Ascending aorta (tissue), 2 donors: ENCODE measurements at regions of chr15 and their contacts with region 1.

Region 1: DNA sequence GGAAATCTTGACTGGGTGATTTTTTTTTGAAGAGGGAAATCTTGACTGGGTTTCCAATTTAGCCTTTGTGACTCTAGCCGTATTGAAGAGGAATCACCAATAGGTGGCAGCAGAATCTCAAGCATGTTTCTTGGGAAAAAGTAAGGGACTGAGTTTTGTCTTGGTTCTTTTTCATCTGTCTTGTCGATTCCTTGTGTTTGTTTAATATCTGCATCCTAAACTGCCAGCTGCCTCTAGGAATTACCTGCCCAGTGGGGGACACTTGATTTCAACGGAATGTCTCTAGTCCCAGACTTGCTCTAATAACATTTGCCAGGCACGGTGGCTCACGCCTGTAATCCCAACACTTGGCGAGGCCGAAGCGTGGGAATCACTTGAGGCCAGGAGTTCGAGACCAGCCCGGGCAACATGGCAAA is 89.2 kb downstream of the RBPMS2 start:
- DNase-seq: no peak
- H3K4me3 ChIP-seq: no peak overlapping the region
- H3K27ac ChIP-seq: no peak overlapping the region
- H3K4me1 ChIP-seq: peaks cover 0 to 5% of the 10 kb centered on the region in 2 donors
- H3K27me3 ChIP-seq: no peaks in the 10 kb centered on the region
- CTCF ChIP-seq: peak; percentile 68 to 80 (median 71)

Region 2: GRCh38 chr15:64634576-64635498 is 51.4 kb before region 1 on chr15:
- intact Hi-C with region 1: no loop called
- DNase-seq: no peak
- H3K4me3 ChIP-seq: no peak overlapping the region
- H3K27ac ChIP-seq: no peak overlapping the region
- H3K4me1 ChIP-seq: peaks cover 4 to 12% of the 10 kb centered on the region in 2 donors
- H3K27me3 ChIP-seq: no peaks in the 10 kb centered on the region
- CTCF ChIP-seq: no peak

Region 3: GRCh38 chr15:64809649-64810496 is 123.6 kb after region 1 on chr15:
- intact Hi-C with region 1: loop called (anchors 2 kb)
- DNase-seq: peak in 1 of 2 donors; percentile 85
- H3K4me3 ChIP-seq: no peak overlapping the region
- H3K27ac ChIP-seq: no peak overlapping the region
- H3K4me1 ChIP-seq: peaks cover 0 to 3% of the 10 kb centered on the region in 2 donors
- H3K27me3 ChIP-seq: no peaks in the 10 kb centered on the region
- CTCF ChIP-seq: peak; percentile 76 to 94 (median 92)

Region 4: GRCh38 chr15:65110676-65111292 is 424.6 kb after region 1 on chr15:
- intact Hi-C with region 1: no loop called
- DNase-seq: no peak
- H3K4me3 ChIP-seq: no peak overlapping the region
- H3K27ac ChIP-seq: peak overlapping the region in 1 of 2 donors; percentile 42
- H3K4me1 ChIP-seq: no peaks in the 10 kb centered on the region
- H3K27me3 ChIP-seq: no peaks in the 10 kb centered on the region
- CTCF ChIP-seq: no peak